Natural killer cell (primary cell): ENCODE measurements at regions of chr6 and their contacts with region 1.

Region 1: DNA sequence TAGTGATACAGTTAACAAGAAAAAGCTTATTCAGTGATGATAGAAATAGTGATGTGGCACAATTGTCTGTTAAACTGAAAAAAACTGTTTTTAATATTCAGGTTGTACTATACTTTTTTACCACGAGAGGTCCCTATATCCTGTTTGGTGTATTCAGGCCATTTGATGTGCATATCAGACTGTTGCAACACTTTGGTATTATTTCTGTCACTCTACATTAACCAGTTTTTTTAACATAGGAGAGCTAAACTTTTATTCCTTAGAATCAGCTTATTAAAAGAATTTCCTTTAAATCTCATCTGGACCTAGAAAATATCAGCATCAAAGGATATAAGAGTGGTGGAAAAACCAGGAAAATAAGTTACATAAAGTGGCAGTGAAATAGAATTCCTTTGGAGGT is 36.8 kb downstream of the TSPYL4 start:
- DNase-seq: peak in 1 of 2 donors; percentile 61
- ATAC-seq: peak; percentile 63 to 84 (median 71)
- H3K4me3 ChIP-seq: no peak overlapping the region
- H3K4me3 Mint-ChIP-seq: no peak overlapping the region
- H3K27ac ChIP-seq: no peak overlapping the region
- H3K27ac Mint-ChIP-seq: no peak overlapping the region
- H3K4me1 ChIP-seq: no peaks in the 10 kb centered on the region
- H3K4me1 Mint-ChIP-seq: no peaks in the 10 kb centered on the region
- H3K27me3 ChIP-seq: no peaks in the 10 kb centered on the region
- H3K27me3 Mint-ChIP-seq: no peaks in the 10 kb centered on the region
- CTCF ChIP-seq: peak; percentile 42

Region 2: GRCh38 chr6:116087437-116088027 is 129.5 kb before region 1 on chr6:
- intact Hi-C with region 1: no loop called
- DNase-seq: no peak
- ATAC-seq: no peak
- H3K4me3 ChIP-seq: no peak overlapping the region
- H3K4me3 Mint-ChIP-seq: no peak overlapping the region
- H3K27ac ChIP-seq: no peak overlapping the region
- H3K27ac Mint-ChIP-seq: no peak overlapping the region
- H3K4me1 ChIP-seq: peaks cover 8% of the 10 kb centered on the region
- H3K4me1 Mint-ChIP-seq: peaks cover 6 to 7% of the 10 kb centered on the region in 2 donors
- H3K27me3 ChIP-seq: no peaks in the 10 kb centered on the region
- H3K27me3 Mint-ChIP-seq: peaks cover 10 to 13% of the 10 kb centered on the region in 2 donors
- CTCF ChIP-seq: no peak

Region 3: DNA sequence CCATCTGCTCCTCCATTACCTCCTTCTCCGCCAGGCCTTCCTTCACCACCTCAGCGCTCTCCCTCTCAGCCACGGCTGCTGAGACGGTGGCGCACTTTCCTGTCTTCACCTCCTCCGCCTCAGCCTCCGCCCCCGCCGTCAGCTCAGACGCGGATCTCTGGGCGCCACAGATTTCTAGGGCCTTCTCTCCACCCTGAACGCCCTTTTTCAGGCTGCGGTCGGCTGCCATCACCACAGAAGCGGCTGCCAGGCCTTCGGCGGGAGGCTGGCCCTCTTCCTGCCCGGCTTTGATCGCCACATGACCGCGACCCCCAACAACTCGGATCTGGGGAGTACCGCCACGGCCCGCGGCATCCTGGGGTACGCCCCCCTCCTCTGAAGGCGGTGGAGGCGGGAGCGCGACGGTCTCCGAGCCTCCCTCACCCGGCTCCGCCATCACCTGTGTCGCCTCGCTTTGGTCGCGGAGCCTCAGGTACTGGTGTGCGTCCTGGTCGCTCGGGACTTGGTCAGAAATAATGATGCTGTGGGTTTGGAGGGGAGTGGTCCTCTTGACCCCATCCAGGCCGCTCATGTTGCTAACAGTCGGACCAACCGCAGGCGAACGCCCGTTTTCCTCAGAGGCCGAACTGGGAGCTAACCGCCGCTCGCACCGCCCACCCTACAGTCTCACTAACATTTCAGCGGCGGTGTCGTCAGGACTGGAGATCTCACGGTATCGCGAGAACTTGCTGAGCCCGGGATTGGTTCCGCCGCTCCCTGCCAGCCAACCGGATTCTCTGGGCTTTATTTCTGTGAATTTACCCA is 62.4 kb after region 1 on chr6 and contains the start of gene TSPYL1:
- intact Hi-C with region 1: loop called (anchors 5 kb)
- DNase-seq: peak; percentile 91 to 98
- ATAC-seq: peak; percentile 88 to 95 (median 89)
- H3K4me3 ChIP-seq: peak within 1 kb of the TSS; percentile 92
- H3K4me3 Mint-ChIP-seq: peak within 1 kb of the TSS; percentile 96
- H3K27ac ChIP-seq: peak within 1 kb of the TSS; percentile 99
- H3K27ac Mint-ChIP-seq: peak within 1 kb of the TSS; percentile 98 to 100
- H3K4me1 ChIP-seq: peaks cover 26% of the 10 kb centered on the region
- H3K4me1 Mint-ChIP-seq: peaks cover 56 to 57% of the 10 kb centered on the region in 2 donors
- H3K27me3 ChIP-seq: no peaks in the 10 kb centered on the region
- H3K27me3 Mint-ChIP-seq: no peaks in the 10 kb centered on the region
- CTCF ChIP-seq: no peak
- total RNA-seq, gene TSPYL1: 134 to 143 (median 142) TPM

Region 4: DNA sequence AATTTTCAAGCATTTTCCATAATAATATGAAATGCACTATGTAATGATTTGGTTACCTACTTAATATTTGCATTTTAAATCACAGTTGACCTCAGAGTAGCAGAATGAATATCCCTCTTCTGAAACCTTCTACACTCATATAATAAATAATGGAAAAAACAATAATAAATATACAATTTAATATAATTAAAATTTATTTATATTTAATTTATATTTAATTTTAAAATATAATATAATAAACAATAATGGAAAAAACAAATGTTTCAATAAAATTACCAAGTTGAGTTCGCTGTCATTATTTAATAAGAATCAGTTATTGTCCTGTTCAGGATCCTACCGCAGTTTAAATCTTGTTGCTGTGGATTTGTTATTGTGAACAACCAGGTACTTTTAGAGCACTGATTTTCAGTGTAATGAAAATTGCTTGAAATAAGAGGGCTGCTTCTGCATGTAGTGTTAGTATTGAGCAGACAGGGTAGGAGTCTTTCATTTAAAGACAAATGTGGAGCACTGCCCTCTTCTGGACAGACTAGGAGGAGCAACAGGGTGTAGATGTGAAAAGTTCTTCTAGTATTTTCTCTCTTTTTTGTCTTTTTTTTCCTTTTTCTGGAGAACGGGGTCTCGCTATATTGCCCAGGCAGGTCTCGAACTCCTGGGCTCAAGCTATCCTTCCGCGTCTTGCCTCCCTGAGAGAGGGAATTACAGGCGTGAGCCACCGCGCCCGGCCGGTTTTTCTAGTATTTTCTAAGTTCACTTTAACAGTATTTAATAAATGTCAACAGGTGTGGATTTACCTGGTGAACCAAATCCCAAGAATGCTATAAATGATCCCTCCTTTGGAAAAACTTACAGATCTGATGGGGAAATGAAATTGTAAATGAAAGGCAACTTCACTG is 314.9 kb after region 1 on chr6:
- intact Hi-C with region 1: loop called (anchors 1 kb)
- DNase-seq: peak; percentile 30 to 82
- ATAC-seq: peak; percentile 95 to 97 (median 97)
- H3K4me3 ChIP-seq: no peak overlapping the region
- H3K4me3 Mint-ChIP-seq: no peak overlapping the region
- H3K27ac ChIP-seq: no peak overlapping the region
- H3K27ac Mint-ChIP-seq: no peak overlapping the region
- H3K4me1 ChIP-seq: no peaks in the 10 kb centered on the region
- H3K4me1 Mint-ChIP-seq: no peaks in the 10 kb centered on the region
- H3K27me3 ChIP-seq: no peaks in the 10 kb centered on the region
- H3K27me3 Mint-ChIP-seq: peaks cover 21 to 42% of the 10 kb centered on the region in 2 donors
- CTCF ChIP-seq: peak; percentile 95

Region 5: DNA sequence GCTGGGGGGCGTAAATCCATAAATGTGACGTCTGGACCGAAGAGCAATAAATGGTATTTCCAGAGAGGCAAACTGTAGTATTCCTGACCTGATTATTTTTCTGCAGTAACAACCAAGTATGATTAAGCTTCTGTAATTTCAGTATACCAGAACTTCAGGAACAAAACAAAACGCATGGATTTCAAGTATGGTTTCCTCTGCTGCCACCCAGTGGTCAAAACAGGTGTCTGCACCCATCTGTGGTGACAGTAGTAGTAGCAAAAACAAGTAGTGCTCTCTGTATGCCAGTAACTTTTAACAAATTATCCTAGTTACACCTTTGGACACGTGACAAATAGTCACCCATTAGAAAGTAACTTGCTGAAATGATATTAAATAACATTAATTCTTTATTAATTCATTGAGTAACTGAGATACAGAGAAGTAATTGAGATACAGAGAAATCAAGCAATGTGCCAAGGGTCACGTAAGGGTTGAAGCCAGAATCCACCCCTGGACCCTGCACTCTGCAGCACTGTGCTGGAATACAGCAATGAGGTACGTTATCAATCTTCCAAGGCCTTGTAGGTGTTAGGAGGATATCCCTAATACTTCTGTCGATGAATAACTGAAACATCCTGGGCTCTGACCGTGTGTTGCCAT is 344.4 kb after region 1 on chr6:
- intact Hi-C with region 1: loop called (anchors 5 kb)
- DNase-seq: peak; percentile 54 to 84
- ATAC-seq: peak; percentile 83 to 95 (median 90)
- H3K4me3 ChIP-seq: no peak overlapping the region
- H3K4me3 Mint-ChIP-seq: no peak overlapping the region
- H3K27ac ChIP-seq: no peak overlapping the region
- H3K27ac Mint-ChIP-seq: no peak overlapping the region
- H3K4me1 ChIP-seq: peaks cover 8% of the 10 kb centered on the region
- H3K4me1 Mint-ChIP-seq: no peaks in the 10 kb centered on the region
- H3K27me3 ChIP-seq: peaks cover 10% of the 10 kb centered on the region
- H3K27me3 Mint-ChIP-seq: peaks cover 31 to 35% of the 10 kb centered on the region in 2 donors
- CTCF ChIP-seq: peak; percentile 93